ENCODE measurements at regions of chr1 and their contacts with region 1.

Region 1: GRCh38 chr1:10507111-10507879 is 32.5 kb downstream of the PEX14 start:
- DNase-seq: peak; percentile 58
- ATAC-seq: peak; percentile 68
- H3K4me3 ChIP-seq: no peak overlapping the region
- H3K4me3 Mint-ChIP-seq: no peak overlapping the region
- H3K27ac ChIP-seq: peak overlapping the region in 1 of 2 donors; percentile 2
- H3K27ac Mint-ChIP-seq: peak overlapping the region; percentile 38
- H3K4me1 ChIP-seq: peaks cover 22 to 29% of the 10 kb centered on the region in 2 donors
- H3K4me1 Mint-ChIP-seq: peaks cover 38% of the 10 kb centered on the region
- H3K27me3 ChIP-seq: no peaks in the 10 kb centered on the region
- H3K27me3 Mint-ChIP-seq: no peaks in the 10 kb centered on the region
- CTCF ChIP-seq: peak; percentile 84

Region 2: GRCh38 chr1:10867138-10867721 is 359.9 kb after region 1 on chr1:
- CTCF ChIA-PET with region 1: interaction called, 5 read pairs
- POLR2A ChIA-PET with region 1: no interaction called
- intact Hi-C with region 1: loop called (anchors 5 kb)
- DNase-seq: peak; percentile 67
- ATAC-seq: peak; percentile 72
- H3K4me3 ChIP-seq: peak overlapping the region in 1 of 5 experiments; percentile 25
- H3K4me3 Mint-ChIP-seq: peak overlapping the region; percentile 16
- H3K27ac ChIP-seq: no peak overlapping the region
- H3K27ac Mint-ChIP-seq: no peak overlapping the region
- H3K4me1 ChIP-seq: peaks cover 11 to 14% of the 10 kb centered on the region in 2 donors
- H3K4me1 Mint-ChIP-seq: peaks cover 15% of the 10 kb centered on the region
- H3K27me3 ChIP-seq: peaks cover 0 to 53% (median 17%) of the 10 kb centered on the region in 4 experiments
- H3K27me3 Mint-ChIP-seq: peaks cover 66% of the 10 kb centered on the region
- CTCF ChIP-seq: peak; percentile 80

Measured in B cell (primary cell).